ENCODE measurements at regions of chr2 and their contacts with region 1.

Region 1: DNA sequence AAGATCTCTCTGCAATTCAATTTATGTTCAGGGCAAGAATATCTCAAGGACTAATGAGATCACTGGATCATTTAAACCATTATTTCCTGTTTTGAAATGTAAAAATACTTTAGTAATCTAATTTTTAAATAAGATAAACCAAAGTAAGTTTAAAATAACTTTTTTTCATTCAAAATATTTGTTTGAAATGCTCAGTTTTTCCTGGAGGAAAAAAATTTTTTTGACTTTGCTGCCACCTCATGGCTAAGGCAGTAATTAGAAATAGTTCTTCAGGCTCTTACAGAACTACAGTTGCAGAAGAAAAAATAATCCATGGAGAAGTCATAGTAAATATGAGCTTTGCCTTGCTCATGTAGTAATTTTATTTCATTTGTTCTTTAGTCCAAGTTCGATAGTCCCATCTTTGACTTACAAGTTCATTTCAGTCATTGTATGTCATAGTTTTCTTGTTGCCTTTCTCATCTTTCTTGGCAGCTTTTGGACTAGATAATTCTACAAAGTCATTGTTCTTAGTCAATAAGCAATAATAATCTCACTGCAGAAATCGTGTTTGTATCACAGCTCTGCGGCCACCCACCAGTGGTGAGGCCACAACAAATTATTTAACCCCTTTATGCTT is 127.4 kb downstream of the DPP4 start:
- DNase-seq: peak; percentile 68
- ATAC-seq: 0 out of 2 replicates have a peak, but pooled peaks have one; percentile 43
- H3K4me3 ChIP-seq: no peak overlapping the region
- H3K27ac ChIP-seq: no peak overlapping the region
- H3K4me1 ChIP-seq: no peaks in the 10 kb centered on the region
- H3K27me3 ChIP-seq: no peaks in the 10 kb centered on the region
- CTCF ChIP-seq: peak; percentile 69

Region 2: DNA sequence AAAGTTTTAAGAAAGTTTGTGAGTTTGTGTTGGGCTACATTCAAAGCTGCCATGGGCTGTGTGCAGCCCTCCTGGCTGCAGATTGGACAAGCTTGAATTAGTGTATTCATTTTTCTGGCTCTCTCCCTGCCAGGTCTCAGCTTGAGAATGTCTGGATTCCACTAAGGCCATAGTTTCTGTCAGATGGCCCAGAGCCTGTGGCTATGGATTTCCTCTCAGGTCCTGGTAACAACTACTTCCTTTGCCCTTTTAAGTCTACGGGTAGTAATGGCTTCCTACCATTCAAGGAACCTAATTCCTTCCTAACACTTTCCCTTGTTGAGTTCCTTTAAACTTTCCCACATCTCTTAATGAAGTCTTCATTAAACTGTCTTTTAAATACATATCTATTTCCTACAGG is 662.7 kb before region 1 on chr2:
- CTCF ChIA-PET with region 1: no interaction called
- POLR2A ChIA-PET with region 1: no interaction called
- intact Hi-C with region 1: loop called (anchors 2 kb)
- DNase-seq: no peak
- ATAC-seq: no peak
- H3K4me3 ChIP-seq: no peak overlapping the region
- H3K27ac ChIP-seq: no peak overlapping the region
- H3K4me1 ChIP-seq: no peaks in the 10 kb centered on the region
- H3K27me3 ChIP-seq: no peaks in the 10 kb centered on the region
- CTCF ChIP-seq: no peak

Region 3: GRCh38 chr2:161414042-161415033 is 532.3 kb before region 1 on chr2:
- CTCF ChIA-PET with region 1: no interaction called
- POLR2A ChIA-PET with region 1: no interaction called
- intact Hi-C with region 1: loop called (anchors 10 kb)
- DNase-seq: peak; percentile 57
- ATAC-seq: peak; percentile 77
- H3K4me3 ChIP-seq: peak overlapping the region; percentile 65
- H3K27ac ChIP-seq: no peak overlapping the region
- H3K4me1 ChIP-seq: peaks cover 19% of the 10 kb centered on the region
- H3K27me3 ChIP-seq: no peaks in the 10 kb centered on the region
- CTCF ChIP-seq: 0 out of 2 replicates have a peak, but pooled peaks have one; percentile 9

Region 4: GRCh38 chr2:161710131-161710915 is 236.3 kb before region 1 on chr2:
- CTCF ChIA-PET with region 1: no interaction called
- POLR2A ChIA-PET with region 1: no interaction called
- intact Hi-C with region 1: loop called (anchors 5 kb)
- DNase-seq: peak; percentile 92
- ATAC-seq: peak; percentile 96
- H3K4me3 ChIP-seq: peak overlapping the region; percentile 52
- H3K27ac ChIP-seq: peak overlapping the region; percentile 92
- H3K4me1 ChIP-seq: peaks cover 50% of the 10 kb centered on the region
- H3K27me3 ChIP-seq: no peaks in the 10 kb centered on the region
- CTCF ChIP-seq: no peak

Region 5: GRCh38 chr2:162007447-162008040 is 60.9 kb after region 1 on chr2:
- CTCF ChIA-PET with region 1: no interaction called
- POLR2A ChIA-PET with region 1: no interaction called
- intact Hi-C with region 1: no loop called
- DNase-seq: peak; percentile 49
- ATAC-seq: no peak
- H3K4me3 ChIP-seq: no peak overlapping the region
- H3K27ac ChIP-seq: no peak overlapping the region
- H3K4me1 ChIP-seq: peaks cover 15% of the 10 kb centered on the region
- H3K27me3 ChIP-seq: no peaks in the 10 kb centered on the region
- CTCF ChIP-seq: peak; percentile 83

Region 6: GRCh38 chr2:162123806-162124758 is 177.5 kb after region 1 on chr2:
- CTCF ChIA-PET with region 1: no interaction called
- POLR2A ChIA-PET with region 1: no interaction called
- intact Hi-C with region 1: loop called (anchors 2 kb)
- DNase-seq: peak; percentile 88
- ATAC-seq: peak; percentile 55
- H3K4me3 ChIP-seq: no peak overlapping the region
- H3K27ac ChIP-seq: no peak overlapping the region
- H3K4me1 ChIP-seq: peaks cover 18% of the 10 kb centered on the region
- H3K27me3 ChIP-seq: no peaks in the 10 kb centered on the region
- CTCF ChIP-seq: peak; percentile 91

Measured in PC-3 (cell line).